Endothelial cell of umbilical vein (primary cell): ENCODE measurements at regions of chr9 and their contacts with region 1.

Region 1: GRCh38 chr9:112620388-112620787 is 97.5 kb downstream of the INIP start:
- DNase-seq: no peak
- H3K4me3 ChIP-seq: no peak overlapping the region
- H3K27ac ChIP-seq: no peak overlapping the region
- H3K4me1 ChIP-seq: no peaks in the 10 kb centered on the region
- H3K27me3 ChIP-seq: no peaks in the 10 kb centered on the region
- CTCF ChIP-seq: no peak
- POLR2A ChIP-seq: no peak

Region 2: DNA sequence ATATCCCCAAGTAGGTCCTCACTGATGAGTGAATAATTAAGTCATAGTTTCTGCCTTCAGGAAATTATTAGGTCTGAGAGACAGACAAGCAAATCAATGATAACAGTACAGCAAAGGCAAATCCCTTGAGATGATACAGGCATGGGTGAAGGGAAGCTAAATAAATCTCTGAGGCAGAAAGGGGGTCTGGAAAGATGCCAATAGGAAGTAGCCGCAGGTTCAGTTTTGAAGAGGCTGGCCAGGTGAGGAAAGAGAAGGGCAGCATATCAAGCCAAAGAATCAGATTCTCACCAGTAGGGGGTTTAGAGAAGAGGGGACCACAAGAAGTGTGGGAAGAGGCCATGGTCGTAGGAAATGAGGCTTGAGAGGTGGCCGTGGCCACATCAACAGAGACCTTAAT is 48.0 kb before region 1 on chr9:
- CTCF ChIA-PET with region 1: no interaction called
- POLR2A ChIA-PET with region 1: no interaction called
- dilution Hi-C with region 1: no loop called
- intact Hi-C with region 1: no loop called
- DNase-seq: no peak
- H3K4me3 ChIP-seq: no peak overlapping the region
- H3K27ac ChIP-seq: no peak overlapping the region
- H3K4me1 ChIP-seq: no peaks in the 10 kb centered on the region
- H3K27me3 ChIP-seq: no peaks in the 10 kb centered on the region
- CTCF ChIP-seq: no peak
- POLR2A ChIP-seq: no peak

Region 3: DNA sequence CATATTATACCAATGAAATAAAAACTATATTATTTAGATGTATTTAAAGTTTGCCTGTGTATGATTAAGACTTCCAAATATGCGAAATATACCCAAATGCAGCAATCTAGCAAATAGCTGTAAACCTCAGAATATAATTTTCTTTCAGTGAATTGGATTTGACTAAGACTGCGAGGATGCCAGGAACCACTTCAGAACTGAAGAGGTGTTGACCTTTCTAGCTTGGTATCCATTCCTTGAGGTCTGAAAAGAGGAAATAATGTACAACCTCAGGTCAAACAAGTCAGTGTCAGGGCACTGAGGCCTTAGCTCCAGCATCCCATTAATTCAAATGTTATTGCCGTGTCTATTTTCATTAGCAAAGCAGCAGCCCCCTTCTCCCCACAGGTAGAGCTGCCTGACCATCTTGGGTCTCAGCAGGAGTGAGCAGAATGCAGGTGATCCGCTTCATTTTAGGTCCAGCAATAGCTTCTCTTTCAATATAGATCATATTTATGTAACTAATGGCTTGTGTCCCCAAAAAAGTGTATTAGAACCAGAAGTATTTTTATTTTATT is 33.7 kb before region 1 on chr9:
- CTCF ChIA-PET with region 1: no interaction called
- POLR2A ChIA-PET with region 1: no interaction called
- dilution Hi-C with region 1: no loop called
- intact Hi-C with region 1: no loop called
- DNase-seq: no peak
- H3K4me3 ChIP-seq: no peak overlapping the region
- H3K27ac ChIP-seq: no peak overlapping the region
- H3K4me1 ChIP-seq: no peaks in the 10 kb centered on the region
- H3K27me3 ChIP-seq: no peaks in the 10 kb centered on the region
- CTCF ChIP-seq: no peak
- POLR2A ChIP-seq: no peak

Region 4: DNA sequence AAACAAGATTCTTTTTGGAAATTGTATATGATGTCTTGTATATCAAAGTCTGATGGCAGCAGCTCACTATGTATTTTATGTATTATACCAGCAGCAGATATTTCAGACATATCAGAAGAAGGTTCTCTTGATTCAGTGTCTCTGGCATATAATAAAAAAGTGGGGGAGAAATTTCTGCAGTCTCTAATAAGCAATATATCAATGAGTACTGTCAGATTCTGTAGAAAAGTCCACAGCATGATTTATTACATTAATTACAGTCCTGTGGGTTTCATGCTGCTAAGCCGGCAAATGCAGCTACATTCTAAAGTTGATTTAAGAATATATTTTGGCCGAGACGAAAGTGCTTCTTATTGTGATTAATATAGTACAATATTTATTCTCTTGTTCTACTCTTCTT is 20.7 kb before region 1 on chr9:
- CTCF ChIA-PET with region 1: interaction called, 10 read pairs
- POLR2A ChIA-PET with region 1: no interaction called
- dilution Hi-C with region 1: no loop called
- intact Hi-C with region 1: no loop called
- DNase-seq: no peak
- H3K4me3 ChIP-seq: no peak overlapping the region
- H3K27ac ChIP-seq: no peak overlapping the region
- H3K4me1 ChIP-seq: no peaks in the 10 kb centered on the region
- H3K27me3 ChIP-seq: no peaks in the 10 kb centered on the region
- CTCF ChIP-seq: no peak
- POLR2A ChIP-seq: no peak

Region 5: GRCh38 chr9:112642126-112642525 is 21.7 kb after region 1 on chr9:
- CTCF ChIA-PET with region 1: no interaction called
- POLR2A ChIA-PET with region 1: no interaction called
- dilution Hi-C with region 1: no loop called
- intact Hi-C with region 1: no loop called
- DNase-seq: no peak
- H3K4me3 ChIP-seq: no peak overlapping the region
- H3K27ac ChIP-seq: no peak overlapping the region
- H3K4me1 ChIP-seq: no peaks in the 10 kb centered on the region
- H3K27me3 ChIP-seq: no peaks in the 10 kb centered on the region
- CTCF ChIP-seq: no peak
- POLR2A ChIP-seq: no peak